Motor neuron (in vitro differentiated cells): ENCODE measurements at regions of chr1 and their contacts with region 1.

Region 1: GRCh38 chr1:201506556-201507359 is at the start of gene CSRP1:
- ATAC-seq: peak; percentile 73 to 89 (median 82)
- H3K4me3 ChIP-seq: peak within 1 kb of the TSS; percentile 16 to 57 (median 36)
- H3K27ac ChIP-seq: no peak within 1 kb of the TSS
- H3K4me1 ChIP-seq: peaks cover 32 to 43% of the 10 kb centered on the region in 2 donors
- total RNA-seq, gene CSRP1: 9.0 to 109 (median 54.9) TPM

Region 2: GRCh38 chr1:201254625-201255506 is 251.9 kb before region 1 on chr1:
- in situ Hi-C with region 1: loop called in 2 of 9 experiments (anchors 25 kb)
- ATAC-seq: peak; percentile 53 to 93 (median 88)
- H3K4me3 ChIP-seq: no peak overlapping the region
- H3K27ac ChIP-seq: no peak overlapping the region
- H3K4me1 ChIP-seq: no peaks in the 10 kb centered on the region

Region 3: GRCh38 chr1:201748335-201748734 is 241.6 kb after region 1 on chr1:
- in situ Hi-C with region 1: no loop called
- ATAC-seq: peak in 5 of 8 experiments; percentile 15 to 82 (median 26)
- H3K4me3 ChIP-seq: no peak overlapping the region
- H3K27ac ChIP-seq: no peak overlapping the region
- H3K4me1 ChIP-seq: peaks cover 20 to 29% of the 10 kb centered on the region in 2 donors

Region 4: GRCh38 chr1:201982623-201983379 is 476.0 kb after region 1 on chr1 and contains the start of gene RNPEP:
- in situ Hi-C with region 1: no loop called
- ATAC-seq: peak; percentile 77 to 86 (median 82)
- H3K4me3 ChIP-seq: peak within 1 kb of the TSS; percentile 62 to 91 (median 83)
- H3K27ac ChIP-seq: peak within 1 kb of the TSS; percentile 85 to 90
- H3K4me1 ChIP-seq: peaks cover 6 to 11% of the 10 kb centered on the region in 2 donors
- total RNA-seq, gene RNPEP: 33.6 to 137 (median 44.4) TPM